GM12878 (cell line): ENCODE measurements at regions of chr22 and their contacts with region 1.

Region 1: DNA sequence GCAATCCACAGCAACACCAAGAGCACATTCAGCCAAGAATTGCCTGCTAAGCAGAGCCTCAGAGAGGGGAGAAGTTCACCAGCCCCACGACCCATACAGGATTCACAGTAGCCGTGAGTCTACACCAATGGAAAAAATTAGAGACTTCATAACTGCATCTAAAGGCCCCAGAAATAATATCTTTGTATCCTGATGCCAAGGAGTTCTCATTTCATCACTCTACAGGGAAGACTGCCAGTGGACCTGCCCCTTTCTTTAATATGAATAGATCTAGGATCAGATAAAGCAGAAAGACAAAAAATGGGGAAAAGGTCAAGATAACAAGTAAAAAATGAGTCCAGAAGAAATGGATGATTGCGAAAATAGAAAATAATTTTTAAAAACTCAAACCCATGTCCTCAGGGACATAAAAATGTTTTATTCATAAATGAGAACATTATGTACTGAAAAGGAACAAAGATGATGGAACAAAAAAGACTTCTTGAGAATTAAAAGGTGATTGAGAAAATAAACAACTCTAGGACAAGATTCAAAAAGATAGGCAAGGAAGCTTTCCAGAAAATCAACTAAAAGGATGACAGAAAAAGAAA is 9.5 kb downstream of the APOL3 start:
- DNase-seq: no peak
- ATAC-seq: no peak
- H3K4me3 ChIP-seq: no peak overlapping the region
- H3K27ac ChIP-seq: no peak overlapping the region
- H3K4me1 ChIP-seq: peaks cover 1% of the 10 kb centered on the region; the same call in 1 of the 2 replicates
- H3K27me3 ChIP-seq: no peaks in the 10 kb centered on the region
- CTCF ChIP-seq: no peak
- EP300 ChIP-seq: no peak
- POLR2A ChIP-seq: no peak
- RAD21 ChIP-seq: no peak

Region 2: DNA sequence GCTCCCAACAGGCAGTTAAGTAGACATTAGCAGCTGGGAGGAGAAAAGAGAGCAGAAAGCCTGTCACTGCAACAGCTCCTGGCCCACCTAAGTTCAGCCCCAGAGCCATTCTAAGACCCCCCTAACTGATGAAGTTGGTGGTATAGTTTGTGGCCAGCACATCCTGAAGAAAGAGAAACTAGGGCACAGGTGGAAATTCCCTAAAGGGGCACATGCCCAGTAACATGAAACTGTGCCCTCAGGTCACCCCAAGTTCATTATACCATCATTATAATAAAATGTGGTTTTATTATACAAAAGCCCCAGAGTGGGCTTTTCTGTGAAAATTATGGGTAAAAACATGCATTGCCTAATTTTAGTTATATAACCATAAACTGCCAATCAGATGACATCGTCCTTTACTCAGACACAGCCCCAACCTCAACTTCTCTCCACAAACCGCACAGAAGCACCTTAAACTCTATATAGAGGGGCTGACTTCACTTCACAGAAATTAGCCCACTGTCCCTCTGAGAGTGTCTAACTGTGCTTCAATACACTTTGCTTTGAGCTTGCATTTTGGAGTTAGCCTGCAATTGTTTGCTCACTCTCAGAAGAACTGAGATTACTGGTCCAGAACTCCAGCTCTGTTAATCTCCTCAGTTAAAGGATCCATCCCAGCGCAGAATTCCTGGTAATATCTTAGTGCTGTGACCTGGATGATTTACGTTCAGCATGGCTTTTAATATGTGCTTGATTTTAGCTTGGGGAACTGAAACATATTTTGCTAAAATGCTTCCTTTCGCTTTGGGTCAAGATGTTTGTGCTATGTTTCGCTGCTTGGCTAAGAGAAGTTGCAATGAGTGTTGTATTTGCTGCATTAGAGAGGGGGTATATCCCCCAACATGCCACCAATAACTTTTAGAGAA is 11.3 kb after region 1 on chr22:
- CTCF ChIA-PET with region 1: interaction called, 5 read pairs
- POLR2A ChIA-PET with region 1: interaction called, 14 read pairs
- RAD21 ChIA-PET with region 1: interaction called, 4 read pairs
- SMC1A ChIA-PET with region 1: interaction called, 18 read pairs
- in situ Hi-C with region 1: no loop called
- intact Hi-C with region 1: no loop called
- DNase-seq: peak; percentile 70
- ATAC-seq: peak; percentile 79
- H3K4me3 ChIP-seq: peak overlapping the region; percentile 55
- H3K27ac ChIP-seq: peak overlapping the region; percentile 94
- H3K4me1 ChIP-seq: peaks cover 58% of the 10 kb centered on the region
- H3K27me3 ChIP-seq: no peaks in the 10 kb centered on the region
- CTCF ChIP-seq: no peak
- EP300 ChIP-seq: peak; percentile 13 to 37; a peak in 3 of 4 replicates
- POLR2A ChIP-seq: no peak
- RAD21 ChIP-seq: no peak

Region 3: GRCh38 chr22:36435516-36436415 is 284.7 kb after region 1 on chr22:
- CTCF ChIA-PET with region 1: no interaction called
- POLR2A ChIA-PET with region 1: no interaction called
- RAD21 ChIA-PET with region 1: no interaction called
- SMC1A ChIA-PET with region 1: no interaction called
- in situ Hi-C with region 1: no loop called
- intact Hi-C with region 1: no loop called
- DNase-seq: peak; percentile 52
- ATAC-seq: peak; percentile 84
- H3K4me3 ChIP-seq: no peak overlapping the region
- H3K27ac ChIP-seq: no peak overlapping the region
- H3K4me1 ChIP-seq: peaks cover 21% of the 10 kb centered on the region
- H3K27me3 ChIP-seq: no peaks in the 10 kb centered on the region
- CTCF ChIP-seq: no peak
- EP300 ChIP-seq: no peak
- POLR2A ChIP-seq: no peak
- RAD21 ChIP-seq: 0 out of 2 replicates have a peak, but pooled peaks have one; percentile 7